ENCODE measurements at regions of chr5 and their contacts with region 1.

Region 1: GRCh38 chr5:104186100-104186499 is 623.5 kb upstream of the NUDT12 start:
- DNase-seq: peak; percentile 68
- H3K4me3 ChIP-seq: no peak overlapping the region
- H3K27ac ChIP-seq: no peak overlapping the region
- H3K4me1 ChIP-seq: peaks cover 12% of the 10 kb centered on the region
- H3K27me3 ChIP-seq: no peaks in the 10 kb centered on the region
- CTCF ChIP-seq: no peak

Region 2: DNA sequence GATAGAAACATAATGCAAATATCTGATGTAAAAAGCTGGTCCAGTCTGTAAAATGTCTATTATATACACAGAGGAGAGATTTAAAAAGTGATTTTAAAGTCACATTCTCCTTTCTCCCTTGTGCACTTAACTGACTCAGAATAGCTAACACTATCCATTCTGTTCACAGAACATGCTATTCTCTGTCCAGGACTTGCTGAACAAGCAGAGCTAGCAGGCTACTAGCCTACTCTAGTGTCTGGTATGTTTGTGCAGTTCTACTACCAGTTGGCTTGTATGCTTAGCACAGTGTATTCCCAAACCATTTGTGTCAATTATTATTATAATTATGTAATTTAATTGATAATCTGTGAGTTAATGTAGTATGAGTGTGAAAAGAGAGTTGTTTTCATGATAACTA is 461.8 kb before region 1 on chr5:
- CTCF ChIA-PET with region 1: no interaction called
- dilution Hi-C with region 1: no loop called
- in situ Hi-C with region 1: no loop called
- intact Hi-C with region 1: no loop called
- DNase-seq: no peak
- H3K4me3 ChIP-seq: no peak overlapping the region
- H3K27ac ChIP-seq: no peak overlapping the region
- H3K4me1 ChIP-seq: no peaks in the 10 kb centered on the region
- H3K27me3 ChIP-seq: no peaks in the 10 kb centered on the region
- CTCF ChIP-seq: no peak

Region 3: DNA sequence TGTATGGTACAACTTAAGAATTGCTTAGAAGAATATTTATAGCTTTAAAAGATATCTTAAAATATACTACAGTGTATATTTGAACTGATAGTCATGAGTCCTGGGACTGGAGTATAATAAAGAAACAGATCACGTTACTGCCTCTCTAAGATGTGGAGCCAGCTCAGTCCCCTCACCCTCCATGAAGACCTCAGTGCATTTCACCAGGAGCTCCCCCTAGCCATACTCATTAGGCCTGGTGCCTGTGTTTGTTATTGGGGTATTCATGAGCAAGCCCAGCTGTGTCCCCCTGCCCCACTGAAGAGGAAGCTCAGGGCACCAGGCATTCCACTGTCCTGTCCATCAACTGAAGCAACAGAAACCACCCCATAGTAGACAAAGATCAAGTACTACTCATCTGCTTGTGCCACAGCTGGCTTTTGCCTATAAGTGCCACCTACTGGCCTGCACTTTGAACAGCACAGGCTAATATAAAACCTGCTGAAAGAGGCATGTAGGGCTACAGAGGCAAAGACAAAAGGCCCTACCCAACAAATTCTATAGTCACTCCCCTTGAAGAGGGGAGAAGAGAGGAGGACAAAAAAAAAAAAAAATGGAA is 226.6 kb after region 1 on chr5:
- CTCF ChIA-PET with region 1: interaction called, 5 read pairs
- dilution Hi-C with region 1: no loop called
- in situ Hi-C with region 1: no loop called
- intact Hi-C with region 1: loop called (anchors 10 kb)
- DNase-seq: peak; percentile 35
- H3K4me3 ChIP-seq: no peak overlapping the region
- H3K27ac ChIP-seq: no peak overlapping the region
- H3K4me1 ChIP-seq: no peaks in the 10 kb centered on the region
- H3K27me3 ChIP-seq: no peaks in the 10 kb centered on the region
- CTCF ChIP-seq: peak; percentile 37 to 67